ENCODE measurements at regions of chr5 and their contacts with region 1.

Region 1: GRCh38 chr5:104178829-104179456 is 616.4 kb upstream of the NUDT12 start:
- DNase-seq: no peak
- H3K4me3 Mint-ChIP-seq: no peak overlapping the region
- H3K27ac Mint-ChIP-seq: no peak overlapping the region
- H3K4me1 Mint-ChIP-seq: no peaks in the 10 kb centered on the region
- H3K27me3 Mint-ChIP-seq: no peaks in the 10 kb centered on the region

Region 2: GRCh38 chr5:103582364-103582763 is 596.6 kb before region 1 on chr5:
- CTCF ChIA-PET with region 1: interaction called, 10 read pairs
- DNase-seq: no peak
- H3K4me3 Mint-ChIP-seq: no peak overlapping the region
- H3K27ac Mint-ChIP-seq: no peak overlapping the region
- H3K4me1 Mint-ChIP-seq: no peaks in the 10 kb centered on the region
- H3K27me3 Mint-ChIP-seq: no peaks in the 10 kb centered on the region

Region 3: DNA sequence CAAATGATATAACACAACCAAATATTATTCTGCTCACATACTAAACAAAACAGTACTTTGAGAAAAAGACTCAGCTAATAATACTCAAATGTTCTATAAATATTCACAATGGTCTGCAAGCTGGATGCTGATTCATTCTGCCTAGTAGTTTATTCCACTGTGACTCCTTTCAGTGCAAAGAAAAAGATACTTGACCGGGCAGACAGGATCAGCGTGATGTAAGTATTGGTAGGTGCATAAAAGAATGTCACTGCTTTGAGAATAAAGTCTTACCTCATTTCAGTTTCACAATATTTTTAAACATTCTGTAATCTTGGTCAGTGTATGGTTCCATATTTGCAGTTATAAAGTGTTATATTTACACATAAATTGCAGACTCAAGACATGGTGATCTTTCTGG is 393.4 kb before region 1 on chr5:
- CTCF ChIA-PET with region 1: no interaction called
- DNase-seq: no peak
- H3K4me3 Mint-ChIP-seq: no peak overlapping the region
- H3K27ac Mint-ChIP-seq: no peak overlapping the region
- H3K4me1 Mint-ChIP-seq: no peaks in the 10 kb centered on the region
- H3K27me3 Mint-ChIP-seq: no peaks in the 10 kb centered on the region

Region 4: DNA sequence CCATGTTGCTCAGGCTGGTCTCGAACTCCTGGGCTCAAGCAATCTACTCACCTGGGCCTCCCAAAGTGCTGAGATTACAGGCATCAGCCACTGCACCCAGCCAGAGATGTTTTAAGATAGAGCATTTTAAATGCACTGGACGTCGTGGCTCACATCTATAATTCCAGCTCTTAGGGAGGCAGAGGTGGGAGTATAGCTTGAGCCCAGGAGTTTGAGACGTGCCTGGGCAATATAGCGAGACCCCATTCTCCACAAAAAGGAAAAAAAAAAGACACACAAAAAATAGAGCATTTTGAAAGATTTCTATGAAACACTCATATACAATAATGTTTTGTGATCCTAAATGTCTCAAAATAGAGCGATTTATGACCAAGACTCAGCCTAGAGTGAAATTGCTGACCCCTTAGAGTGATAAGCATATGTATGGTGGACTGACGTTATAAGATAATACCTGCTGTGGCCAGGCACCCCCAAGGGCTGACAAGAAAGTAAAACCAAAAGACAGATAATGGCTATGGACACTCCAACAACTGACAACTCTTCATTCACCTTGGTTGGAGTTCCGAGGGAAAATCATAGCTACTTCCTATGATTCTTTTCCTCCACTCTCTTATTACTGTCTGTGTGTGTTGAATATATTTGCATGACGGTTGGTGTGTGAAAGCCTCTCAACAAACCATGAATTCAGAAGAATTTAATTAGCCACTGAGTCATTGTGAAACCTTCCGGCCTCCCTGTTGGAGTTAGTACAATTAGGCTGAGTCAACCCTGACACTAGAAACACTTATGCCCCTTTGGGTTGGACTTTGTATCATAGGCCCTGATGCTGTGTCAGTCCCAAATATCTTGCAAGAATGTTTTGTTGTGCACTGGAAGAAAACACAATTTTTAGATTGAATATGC is 89.8 kb before region 1 on chr5:
- CTCF ChIA-PET with region 1: no interaction called
- DNase-seq: no peak
- H3K4me3 Mint-ChIP-seq: no peak overlapping the region
- H3K27ac Mint-ChIP-seq: no peak overlapping the region
- H3K4me1 Mint-ChIP-seq: no peaks in the 10 kb centered on the region
- H3K27me3 Mint-ChIP-seq: no peaks in the 10 kb centered on the region